AG04449 (cell line): ENCODE measurements at regions of chr1 and their contacts with region 1.

Region 1: GRCh38 chr1:75265792-75266191 is 131.6 kb downstream of the LHX8 start:
- DNase-seq: no peak
- H3K4me3 ChIP-seq: no peak overlapping the region
- CTCF ChIP-seq: peak; percentile 41

Region 2: GRCh38 chr1:75276385-75276784 is 10.6 kb after region 1 on chr1:
- CTCF ChIA-PET with region 1: interaction called, 32 read pairs
- POLR2A ChIA-PET with region 1: no interaction called
- DNase-seq: no peak
- H3K4me3 ChIP-seq: no peak overlapping the region
- CTCF ChIP-seq: no peak

Region 3: GRCh38 chr1:75632350-75632949 is 366.7 kb after region 1 on chr1:
- CTCF ChIA-PET with region 1: interaction called, 20 read pairs
- POLR2A ChIA-PET with region 1: no interaction called
- DNase-seq: no peak
- H3K4me3 ChIP-seq: no peak overlapping the region
- CTCF ChIP-seq: peak; percentile 68